ENCODE measurements at regions of chr20 and their contacts with region 1.

Region 1: GRCh38 chr20:20410678-20411077 is 42.8 kb downstream of the INSM1 start:
- DNase-seq: no peak
- H3K4me3 Mint-ChIP-seq: peak overlapping the region; percentile 68
- H3K27ac Mint-ChIP-seq: peak overlapping the region; percentile 72
- H3K4me1 Mint-ChIP-seq: peaks cover 47% of the 10 kb centered on the region
- H3K27me3 Mint-ChIP-seq: no peaks in the 10 kb centered on the region

Region 2: GRCh38 chr20:20317195-20317594 is 93.5 kb before region 1 on chr20:
- intact Hi-C with region 1: no loop called
- DNase-seq: no peak
- H3K4me3 Mint-ChIP-seq: no peak overlapping the region
- H3K27ac Mint-ChIP-seq: no peak overlapping the region
- H3K4me1 Mint-ChIP-seq: no peaks in the 10 kb centered on the region
- H3K27me3 Mint-ChIP-seq: no peaks in the 10 kb centered on the region

Region 3: DNA sequence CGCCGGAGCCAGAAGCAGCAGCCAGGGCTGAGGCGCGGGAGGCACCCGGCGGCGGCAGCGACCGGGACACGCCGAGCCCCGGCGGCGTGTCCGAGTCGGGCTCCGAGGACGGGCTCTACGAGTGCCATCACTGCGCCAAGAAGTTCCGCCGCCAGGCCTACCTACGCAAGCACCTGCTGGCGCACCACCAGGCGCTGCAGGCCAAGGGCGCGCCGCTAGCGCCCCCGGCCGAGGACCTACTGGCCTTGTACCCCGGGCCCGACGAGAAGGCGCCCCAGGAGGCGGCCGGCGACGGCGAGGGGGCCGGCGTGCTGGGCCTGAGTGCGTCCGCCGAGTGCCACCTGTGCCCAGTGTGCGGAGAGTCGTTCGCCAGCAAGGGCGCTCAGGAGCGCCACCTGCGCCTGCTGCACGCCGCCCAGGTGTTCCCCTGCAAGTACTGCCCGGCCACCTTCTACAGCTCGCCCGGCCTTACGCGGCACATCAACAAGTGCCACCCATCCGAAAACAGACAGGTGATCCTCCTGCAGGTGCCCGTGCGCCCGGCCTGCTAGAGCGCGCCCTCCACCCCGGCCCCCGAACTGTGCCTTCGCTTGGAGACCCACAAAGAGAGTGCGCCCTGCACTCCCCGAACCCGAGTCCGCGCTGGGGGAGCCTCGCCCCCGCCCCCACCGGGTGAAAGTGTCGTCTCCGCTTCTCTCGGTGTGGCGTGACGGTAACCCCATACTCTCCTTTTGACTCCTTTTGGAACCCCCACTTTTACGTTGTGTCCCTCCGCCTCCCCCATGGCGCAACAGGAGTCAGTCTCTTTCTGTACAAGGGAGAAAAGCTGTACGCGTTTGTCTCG is 41.2 kb before region 1 on chr20:
- intact Hi-C with region 1: loop called (anchors 2 kb)
- DNase-seq: no peak
- H3K4me3 Mint-ChIP-seq: peak overlapping the region; percentile 84
- H3K27ac Mint-ChIP-seq: peak overlapping the region; percentile 56
- H3K4me1 Mint-ChIP-seq: peaks cover 25% of the 10 kb centered on the region
- H3K27me3 Mint-ChIP-seq: peaks cover 51% of the 10 kb centered on the region

Region 4: GRCh38 chr20:20425823-20426654 is 15.4 kb after region 1 on chr20:
- intact Hi-C with region 1: loop called (anchors 2 kb)
- DNase-seq: no peak
- H3K4me3 Mint-ChIP-seq: no peak overlapping the region
- H3K27ac Mint-ChIP-seq: peak overlapping the region; percentile 87
- H3K4me1 Mint-ChIP-seq: peaks cover 47% of the 10 kb centered on the region
- H3K27me3 Mint-ChIP-seq: no peaks in the 10 kb centered on the region

Region 5: GRCh38 chr20:20452254-20452676 is 41.6 kb after region 1 on chr20:
- intact Hi-C with region 1: loop called (anchors 5 kb)
- DNase-seq: peak; percentile 39
- H3K4me3 Mint-ChIP-seq: peak overlapping the region; percentile 82
- H3K27ac Mint-ChIP-seq: peak overlapping the region; percentile 82
- H3K4me1 Mint-ChIP-seq: peaks cover 43% of the 10 kb centered on the region
- H3K27me3 Mint-ChIP-seq: no peaks in the 10 kb centered on the region